Activated T-helper 2 cell treated with anti-CD3 and anti-CD28 coated beads, Interferon-gamma antibody, Interleukin-2, Interleukin-4, amounts not matched to agents 10 μg/mL and 5 μg/mL and 100 μg/mL, durations not matched to agents 14 hours and 24 hours and 36 hours (primary cell): ENCODE measurements at regions of chr2 and their contacts with region 1.

Region 1: GRCh38 chr2:84846041-84846663 is 34.7 kb downstream of the TRABD2A start:
- DNase-seq: peak; percentile 46
- H3K4me3 Mint-ChIP-seq: peak overlapping the region; percentile 48
- H3K27ac Mint-ChIP-seq: peak overlapping the region; percentile 87
- H3K4me1 Mint-ChIP-seq: peaks cover 77% of the 10 kb centered on the region
- H3K27me3 Mint-ChIP-seq: no peaks in the 10 kb centered on the region

Region 2: DNA sequence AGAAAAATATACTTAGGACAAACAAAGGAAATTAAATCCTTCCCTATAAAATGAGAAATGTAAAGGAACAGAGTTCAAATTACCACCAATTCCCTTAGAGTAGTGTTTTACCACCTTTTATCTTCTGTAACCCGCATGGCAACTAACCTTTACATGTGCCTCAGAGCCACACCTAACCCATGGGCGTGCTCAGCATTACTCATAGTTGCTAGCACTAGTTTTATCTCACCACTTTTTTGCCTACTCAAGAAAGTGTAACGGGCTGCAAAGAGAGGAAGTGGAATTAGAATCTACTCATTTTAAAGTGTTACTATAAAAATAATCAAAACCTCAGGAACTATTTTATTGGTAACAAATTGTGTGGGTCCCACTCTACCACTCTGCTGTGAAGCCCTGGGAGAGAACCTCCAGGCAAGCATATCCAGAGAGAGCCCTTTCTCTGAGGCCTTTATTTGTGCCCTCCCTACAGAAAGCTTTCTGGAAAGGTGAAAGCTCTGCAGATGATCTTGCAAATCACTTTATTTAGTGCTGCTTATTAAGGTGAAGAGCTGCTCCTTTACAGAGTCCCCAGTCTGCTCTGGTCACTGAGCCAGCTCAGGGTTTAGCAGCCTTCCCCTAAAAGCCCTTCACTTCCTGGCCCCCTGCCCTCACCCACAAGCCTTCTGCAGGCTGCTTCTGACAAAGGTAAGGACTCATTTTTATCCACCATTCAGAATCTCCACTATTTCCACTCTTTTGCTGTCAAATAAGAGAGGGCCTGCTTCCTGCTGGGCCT is 64.0 kb before region 1 on chr2:
- intact Hi-C with region 1: loop called (anchors 2 kb)
- DNase-seq: peak; percentile 57
- H3K4me3 Mint-ChIP-seq: no peak overlapping the region
- H3K27ac Mint-ChIP-seq: peak overlapping the region; percentile 87
- H3K4me1 Mint-ChIP-seq: peaks cover 66% of the 10 kb centered on the region
- H3K27me3 Mint-ChIP-seq: no peaks in the 10 kb centered on the region

Region 3: GRCh38 chr2:84792856-84793522 is 53.2 kb before region 1 on chr2:
- intact Hi-C with region 1: no loop called
- DNase-seq: no peak
- H3K4me3 Mint-ChIP-seq: no peak overlapping the region
- H3K27ac Mint-ChIP-seq: no peak overlapping the region
- H3K4me1 Mint-ChIP-seq: peaks cover 4% of the 10 kb centered on the region
- H3K27me3 Mint-ChIP-seq: no peaks in the 10 kb centered on the region

Region 4: DNA sequence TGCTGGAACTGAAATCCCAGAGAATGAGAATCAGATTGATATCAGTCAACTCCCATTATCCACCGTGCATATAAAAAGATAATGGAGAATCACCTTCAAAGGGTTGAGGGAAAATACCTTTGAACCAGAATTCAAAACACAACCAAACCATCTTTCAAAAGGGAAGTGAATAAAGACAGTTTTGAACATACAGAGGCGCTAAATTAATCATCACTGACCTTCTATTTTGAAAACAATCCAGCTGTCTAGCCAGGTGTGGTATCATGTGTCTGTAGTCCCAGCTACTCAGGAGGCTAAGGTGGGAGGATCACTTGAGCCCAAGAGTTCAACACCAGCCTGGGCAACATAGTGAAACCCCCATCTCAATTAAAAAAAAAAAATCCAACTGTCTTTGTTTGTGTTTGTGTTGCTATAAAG is 28.9 kb before region 1 on chr2:
- intact Hi-C with region 1: loop called (anchors 2 kb)
- DNase-seq: no peak
- H3K4me3 Mint-ChIP-seq: no peak overlapping the region
- H3K27ac Mint-ChIP-seq: peak overlapping the region; percentile 31
- H3K4me1 Mint-ChIP-seq: peaks cover 29% of the 10 kb centered on the region
- H3K27me3 Mint-ChIP-seq: no peaks in the 10 kb centered on the region

Region 5: GRCh38 chr2:84832772-84833461 is 13.2 kb before region 1 on chr2:
- intact Hi-C with region 1: no loop called
- DNase-seq: no peak
- H3K4me3 Mint-ChIP-seq: peak overlapping the region; percentile 41
- H3K27ac Mint-ChIP-seq: peak overlapping the region; percentile 47
- H3K4me1 Mint-ChIP-seq: peaks cover 37% of the 10 kb centered on the region
- H3K27me3 Mint-ChIP-seq: no peaks in the 10 kb centered on the region

Region 6: GRCh38 chr2:84865181-84865783 is 19.1 kb after region 1 on chr2:
- intact Hi-C with region 1: loop called (anchors 2 kb)
- DNase-seq: no peak
- H3K4me3 Mint-ChIP-seq: no peak overlapping the region
- H3K27ac Mint-ChIP-seq: no peak overlapping the region
- H3K4me1 Mint-ChIP-seq: peaks cover 49% of the 10 kb centered on the region
- H3K27me3 Mint-ChIP-seq: no peaks in the 10 kb centered on the region

Region 7: GRCh38 chr2:84925724-84926376 is 79.7 kb after region 1 on chr2:
- intact Hi-C with region 1: no loop called
- DNase-seq: peak; percentile 97
- H3K4me3 Mint-ChIP-seq: peak overlapping the region; percentile 91
- H3K27ac Mint-ChIP-seq: peak overlapping the region; percentile 92
- H3K4me1 Mint-ChIP-seq: peaks cover 49% of the 10 kb centered on the region
- H3K27me3 Mint-ChIP-seq: no peaks in the 10 kb centered on the region